OCI-LY7 (cell line): ENCODE measurements at regions of chr9 and their contacts with region 1.

Region 1: GRCh38 chr9:76643399-76644117 is 120.7 kb upstream of the PCA3 start:
- DNase-seq: peak; percentile 73
- H3K4me3 ChIP-seq: no peak overlapping the region
- H3K27ac ChIP-seq: peak overlapping the region; percentile 27
- H3K4me1 ChIP-seq: peaks cover 18% of the 10 kb centered on the region
- CTCF ChIP-seq: no peak

Region 2: DNA sequence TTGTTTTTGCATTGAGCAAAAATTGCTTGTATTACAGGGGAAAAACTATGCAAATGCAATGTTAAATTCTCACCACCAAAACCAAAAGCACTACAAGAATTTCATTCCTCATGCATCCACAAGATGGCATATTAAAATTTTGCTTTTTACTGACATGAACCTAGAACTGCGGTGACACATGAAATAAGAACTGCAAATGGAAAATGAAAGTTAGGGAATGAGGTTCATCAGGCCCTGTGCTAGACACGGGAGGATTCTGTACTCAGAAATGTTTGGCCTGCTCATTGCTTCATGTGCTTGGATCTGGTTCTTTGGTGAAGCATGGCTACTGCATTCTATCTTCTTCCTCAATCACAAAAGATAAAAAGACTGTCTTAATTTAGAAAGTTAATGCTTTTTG is 240.2 kb before region 1 on chr9:
- CTCF ChIA-PET with region 1: no interaction called
- POLR2A ChIA-PET with region 1: no interaction called
- intact Hi-C with region 1: loop called (anchors 5 kb)
- DNase-seq: peak; percentile 68
- H3K4me3 ChIP-seq: peak overlapping the region; percentile 6
- H3K27ac ChIP-seq: peak overlapping the region; percentile 23
- H3K4me1 ChIP-seq: peaks cover 46% of the 10 kb centered on the region
- CTCF ChIP-seq: peak; percentile 86

Region 3: DNA sequence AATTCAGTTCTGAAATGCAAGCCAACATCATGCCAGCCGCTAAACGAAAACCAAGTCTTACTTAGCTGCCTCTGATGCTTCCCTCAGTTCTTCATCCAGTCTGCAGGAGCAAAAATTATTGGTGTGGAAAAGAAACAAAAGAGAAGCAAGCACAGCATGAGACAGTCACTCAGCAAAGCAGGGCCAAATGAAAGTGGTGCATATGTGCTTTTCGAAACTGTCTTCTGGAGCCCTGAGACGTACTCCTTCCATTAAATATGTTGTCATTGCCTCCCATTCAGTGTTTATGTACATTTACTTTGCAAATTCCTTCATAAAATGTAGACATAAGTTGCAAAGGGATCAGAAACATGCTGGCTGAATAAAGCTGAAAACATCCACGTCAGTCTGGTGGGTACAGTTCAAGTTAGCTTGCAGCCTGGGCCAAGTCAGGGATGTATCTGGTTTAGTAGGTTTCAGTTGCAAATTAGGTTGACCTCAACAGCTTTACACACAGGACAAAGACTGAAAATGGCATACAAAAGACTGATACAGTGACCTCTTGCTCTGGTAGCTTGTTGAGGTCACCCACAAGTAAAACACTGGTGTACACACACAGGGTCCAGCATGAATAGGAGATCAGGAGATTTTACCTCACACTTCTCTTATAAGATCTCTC is 19.0 kb before region 1 on chr9:
- CTCF ChIA-PET with region 1: interaction called, 3 read pairs
- POLR2A ChIA-PET with region 1: interaction called, 6 read pairs
- intact Hi-C with region 1: loop called (anchors 2 kb)
- DNase-seq: peak; percentile 29
- H3K4me3 ChIP-seq: no peak overlapping the region
- H3K27ac ChIP-seq: no peak overlapping the region
- H3K4me1 ChIP-seq: peaks cover 51% of the 10 kb centered on the region
- CTCF ChIP-seq: no peak